Dorsolateral prefrontal cortex (tissue), 120 donors: ENCODE measurements at regions of chr14 and their contacts with region 1.

Region 1: GRCh38 chr14:92686900-92687444 is 61.5 kb downstream of the LGMN start:
- DNase-seq: peak in 9 of 10 donors; percentile 68 to 92 (median 82)
- H3K4me3 ChIP-seq: peak overlapping the region; percentile 33 to 74 (median 59)
- H3K27ac ChIP-seq: peak overlapping the region in 29 of 59 donors; percentile 7 to 74 (median 51)
- H3K27me3 ChIP-seq: peaks cover 0 to 4% (median 0%) of the 10 kb centered on the region in 45 donors
- CTCF ChIP-seq: peak; percentile 69 to 100 (median 98)

Region 2: GRCh38 chr14:92121670-92122350 is 565.2 kb before region 1 on chr14 and contains the starts of genes CPSF2 and NDUFB1:
- intact Hi-C with region 1: loop called in 1 of 2 experiments (anchors 10 kb)
- DNase-seq: peak; percentile 72 to 91 (median 88)
- H3K4me3 ChIP-seq: peak within 1 kb of the TSS; percentile 72 to 99 (median 94)
- H3K27ac ChIP-seq: peak within 1 kb of the TSS; percentile 69 to 99 (median 96)
- H3K27me3 ChIP-seq: no peaks in the 10 kb centered on the region
- CTCF ChIP-seq: peak in 34 of 56 donors; percentile 2 to 52 (median 26)
- total RNA-seq, gene CPSF2: 26.8 to 56.4 (median 40.4) TPM
- total RNA-seq, gene NDUFB1: 64.8 to 207 (median 138) TPM

Region 3: GRCh38 chr14:92495035-92495434 is 191.9 kb before region 1 on chr14:
- intact Hi-C with region 1: no loop called
- DNase-seq: no peak
- H3K4me3 ChIP-seq: no peak overlapping the region
- H3K27ac ChIP-seq: no peak overlapping the region
- H3K27me3 ChIP-seq: peaks cover 0 to 6% (median 0%) of the 10 kb centered on the region in 45 donors
- CTCF ChIP-seq: no peak

Region 4: GRCh38 chr14:92728759-92729370 is 41.9 kb after region 1 on chr14:
- intact Hi-C with region 1: no loop called
- DNase-seq: peak in 1 of 10 donors; percentile 9
- H3K4me3 ChIP-seq: no peak overlapping the region
- H3K27ac ChIP-seq: no peak overlapping the region
- H3K27me3 ChIP-seq: no peaks in the 10 kb centered on the region
- CTCF ChIP-seq: no peak

Region 5: DNA sequence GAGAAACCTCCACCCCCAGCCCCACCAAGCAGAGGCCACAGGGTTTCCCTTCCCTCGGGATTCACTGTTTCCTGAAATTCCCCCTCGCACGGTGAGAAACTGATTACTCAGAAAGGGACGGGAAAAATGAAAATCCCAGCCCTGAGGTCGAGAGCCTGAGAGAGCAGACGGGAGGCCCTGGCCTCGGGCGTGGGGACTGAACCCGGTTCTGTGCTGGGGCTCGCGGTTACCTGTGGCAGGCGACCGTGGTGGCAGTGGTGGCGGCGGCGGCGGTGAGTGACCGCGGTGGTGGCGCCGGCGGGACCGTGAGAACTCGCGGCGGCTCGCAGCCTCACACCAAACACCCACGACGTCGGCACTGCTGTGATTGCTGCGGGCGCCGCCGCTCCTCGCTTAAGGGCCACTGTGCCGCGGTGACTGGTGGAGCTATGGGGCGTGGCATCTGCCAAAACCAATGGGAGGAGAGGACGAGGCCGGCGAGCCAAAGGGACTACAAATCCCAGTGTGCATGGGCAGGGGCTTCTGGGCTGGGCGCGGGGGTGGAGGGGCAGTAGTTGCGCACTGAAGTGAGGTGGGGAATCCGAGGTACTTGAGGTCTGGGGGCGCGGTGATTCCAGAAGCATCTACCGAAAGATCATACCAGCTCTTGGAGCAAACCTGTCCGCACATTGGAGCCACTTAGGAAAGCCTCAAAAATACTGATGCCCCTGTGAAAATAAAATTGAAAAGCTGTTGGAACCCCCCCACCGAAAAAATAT is 61.5 kb after region 1 on chr14 and contains the start of gene LGMN:
- intact Hi-C with region 1: loop called in 1 of 2 experiments (anchors 10 kb)
- DNase-seq: peak; percentile 94 to 99 (median 99)
- H3K4me3 ChIP-seq: peak within 1 kb of the TSS; percentile 63 to 99 (median 88)
- H3K27ac ChIP-seq: peak within 1 kb of the TSS; percentile 14 to 94 (median 81)
- H3K27me3 ChIP-seq: no peaks in the 10 kb centered on the region
- CTCF ChIP-seq: peak in 34 of 56 donors; percentile 8 to 55 (median 32)
- total RNA-seq, gene LGMN: 34.8 to 93.8 (median 64.1) TPM

Region 6: DNA sequence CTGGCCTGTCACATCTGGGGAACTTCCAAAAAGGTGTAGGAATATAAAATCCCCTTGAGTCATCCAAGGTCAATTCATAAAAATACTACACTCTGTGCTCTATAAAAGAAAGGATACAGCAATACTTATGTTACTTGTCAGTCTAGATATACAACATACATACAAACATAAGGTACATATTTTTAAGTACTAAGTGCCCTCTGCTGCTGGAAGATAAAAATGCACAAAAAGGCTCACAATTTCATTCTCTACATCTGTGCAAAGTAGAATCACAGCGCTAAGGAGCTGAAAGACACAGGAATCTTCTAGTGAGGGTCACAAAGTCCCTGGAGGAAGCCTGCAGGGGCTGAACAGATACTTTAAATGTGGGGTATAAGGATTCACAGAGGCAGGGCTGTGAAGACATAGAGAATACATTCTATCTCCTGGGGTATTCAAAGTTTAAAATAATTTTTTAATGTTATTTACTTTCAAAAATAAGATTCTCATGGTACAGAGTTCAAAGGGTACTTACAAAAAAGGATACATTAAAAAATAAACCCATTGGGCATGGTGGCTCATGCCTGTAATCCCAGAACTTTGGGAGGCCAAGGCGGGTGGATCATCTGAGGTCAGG is 97.0 kb after region 1 on chr14:
- intact Hi-C with region 1: loop called (anchors 2 to 5 kb)
- DNase-seq: peak in 1 of 10 donors; percentile 8
- H3K4me3 ChIP-seq: no peak overlapping the region
- H3K27ac ChIP-seq: no peak overlapping the region
- H3K27me3 ChIP-seq: no peaks in the 10 kb centered on the region
- CTCF ChIP-seq: peak; percentile 29 to 81 (median 65)

Region 7: DNA sequence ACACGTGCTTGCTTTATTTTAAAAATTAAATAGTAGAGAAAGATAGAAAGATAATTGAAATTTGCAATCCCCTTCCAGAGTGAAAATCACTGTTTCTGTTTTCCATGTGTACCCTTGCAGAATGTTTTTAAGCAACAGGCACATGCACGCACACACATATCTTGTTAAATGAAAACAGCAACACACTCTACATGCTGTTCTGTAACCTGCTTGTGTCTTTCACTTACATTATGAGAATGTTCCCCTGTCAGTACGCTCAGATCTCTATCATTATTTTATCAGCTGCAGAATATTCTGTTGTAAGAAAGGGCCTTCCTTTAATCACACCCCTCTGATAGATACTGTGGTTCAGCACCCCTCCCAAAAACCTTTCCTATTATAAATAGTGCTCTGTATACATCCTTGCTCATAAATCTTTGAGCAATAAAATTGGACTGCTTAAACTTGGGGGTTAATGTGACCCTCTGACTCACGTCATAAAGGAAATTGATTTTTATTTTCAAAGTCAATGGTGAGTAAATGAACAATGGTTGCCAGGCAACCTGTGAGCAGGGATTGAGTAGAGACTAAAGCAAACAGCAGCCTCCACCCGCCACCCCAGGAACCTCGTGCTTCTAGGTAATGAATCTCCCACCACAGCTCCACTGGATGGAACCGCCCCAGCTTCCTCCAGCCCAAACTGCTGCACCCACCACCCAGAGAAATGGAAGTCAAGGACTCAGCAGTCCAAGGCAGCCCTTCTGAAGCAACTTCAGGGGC is 204.0 kb after region 1 on chr14:
- intact Hi-C with region 1: no loop called
- DNase-seq: no peak
- H3K4me3 ChIP-seq: no peak overlapping the region
- H3K27ac ChIP-seq: no peak overlapping the region
- H3K27me3 ChIP-seq: peaks cover 0 to 7% (median 0%) of the 10 kb centered on the region in 45 donors
- CTCF ChIP-seq: no peak